ENCODE measurements at regions of chr5 and their contacts with region 1.

Region 1: GRCh38 chr5:112983363-112983762 is 6.8 kb downstream of the DCP2 start:
- DNase-seq: peak; percentile 31
- ATAC-seq: no peak; the same call in 1 of the 2 replicates
- H3K4me3 ChIP-seq: no peak overlapping the region
- H3K27ac ChIP-seq: no peak overlapping the region
- H3K4me1 ChIP-seq: peaks cover 2% of the 10 kb centered on the region; the same call in 1 of the 2 replicates
- H3K27me3 ChIP-seq: no peaks in the 10 kb centered on the region
- CTCF ChIP-seq: no peak
- POLR2A ChIP-seq: no peak
- RAD21 ChIP-seq: no peak

Region 2: GRCh38 chr5:112951124-112951702 is 32.1 kb before region 1 on chr5:
- CTCF ChIA-PET with region 1: no interaction called
- POLR2A ChIA-PET with region 1: no interaction called
- dilution Hi-C with region 1: no loop called
- in situ Hi-C with region 1: no loop called
- intact Hi-C with region 1: no loop called
- DNase-seq: no peak
- ATAC-seq: no peak
- H3K4me3 ChIP-seq: no peak overlapping the region
- H3K27ac ChIP-seq: no peak overlapping the region
- H3K4me1 ChIP-seq: no peaks in the 10 kb centered on the region
- H3K27me3 ChIP-seq: peaks cover 2% of the 10 kb centered on the region
- CTCF ChIP-seq: no peak
- POLR2A ChIP-seq: no peak
- RAD21 ChIP-seq: no peak

Region 3: GRCh38 chr5:113507601-113508000 is 524.2 kb after region 1 on chr5:
- CTCF ChIA-PET with region 1: no interaction called
- POLR2A ChIA-PET with region 1: no interaction called
- dilution Hi-C with region 1: no loop called
- in situ Hi-C with region 1: loop called (anchors 10 kb)
- intact Hi-C with region 1: no loop called
- DNase-seq: no peak
- ATAC-seq: no peak
- H3K4me3 ChIP-seq: no peak overlapping the region
- H3K27ac ChIP-seq: no peak overlapping the region
- H3K4me1 ChIP-seq: no peaks in the 10 kb centered on the region; the same call in 1 of the 2 replicates
- H3K27me3 ChIP-seq: no peaks in the 10 kb centered on the region
- CTCF ChIP-seq: no peak
- POLR2A ChIP-seq: no peak
- RAD21 ChIP-seq: no peak